Activated T-helper 1 cell treated with anti-CD3 and anti-CD28 coated beads, Interleukin-12 subunit alpha, Interleukin-12 subunit beta, Interleukin-2, Interleukin-4 antibody, amounts not matched to agents 30 ng/mL and 10 ng/mL and 1 ng/mL, durations not matched to agents 14 hours and 24 hours and 36 hours (primary cell): ENCODE measurements at regions of chr1 and their contacts with region 1.

Region 1: GRCh38 chr1:28359592-28360239 is 9.8 kb upstream of the PHACTR4 start:
- DNase-seq: peak; percentile 50
- H3K4me3 Mint-ChIP-seq: no peak overlapping the region
- H3K27ac Mint-ChIP-seq: no peak overlapping the region
- H3K4me1 Mint-ChIP-seq: no peaks in the 10 kb centered on the region
- H3K27me3 Mint-ChIP-seq: peaks cover 3% of the 10 kb centered on the region

Region 2: GRCh38 chr1:28129150-28129549 is 230.6 kb before region 1 on chr1:
- intact Hi-C with region 1: no loop called
- DNase-seq: no peak
- H3K4me3 Mint-ChIP-seq: no peak overlapping the region
- H3K27ac Mint-ChIP-seq: no peak overlapping the region
- H3K4me1 Mint-ChIP-seq: peaks cover 8% of the 10 kb centered on the region
- H3K27me3 Mint-ChIP-seq: peaks cover 45% of the 10 kb centered on the region

Region 3: GRCh38 chr1:28282426-28283407 is 77.0 kb before region 1 on chr1:
- intact Hi-C with region 1: no loop called
- DNase-seq: no peak
- H3K4me3 Mint-ChIP-seq: no peak overlapping the region
- H3K27ac Mint-ChIP-seq: no peak overlapping the region
- H3K4me1 Mint-ChIP-seq: peaks cover 8% of the 10 kb centered on the region
- H3K27me3 Mint-ChIP-seq: no peaks in the 10 kb centered on the region

Region 4: DNA sequence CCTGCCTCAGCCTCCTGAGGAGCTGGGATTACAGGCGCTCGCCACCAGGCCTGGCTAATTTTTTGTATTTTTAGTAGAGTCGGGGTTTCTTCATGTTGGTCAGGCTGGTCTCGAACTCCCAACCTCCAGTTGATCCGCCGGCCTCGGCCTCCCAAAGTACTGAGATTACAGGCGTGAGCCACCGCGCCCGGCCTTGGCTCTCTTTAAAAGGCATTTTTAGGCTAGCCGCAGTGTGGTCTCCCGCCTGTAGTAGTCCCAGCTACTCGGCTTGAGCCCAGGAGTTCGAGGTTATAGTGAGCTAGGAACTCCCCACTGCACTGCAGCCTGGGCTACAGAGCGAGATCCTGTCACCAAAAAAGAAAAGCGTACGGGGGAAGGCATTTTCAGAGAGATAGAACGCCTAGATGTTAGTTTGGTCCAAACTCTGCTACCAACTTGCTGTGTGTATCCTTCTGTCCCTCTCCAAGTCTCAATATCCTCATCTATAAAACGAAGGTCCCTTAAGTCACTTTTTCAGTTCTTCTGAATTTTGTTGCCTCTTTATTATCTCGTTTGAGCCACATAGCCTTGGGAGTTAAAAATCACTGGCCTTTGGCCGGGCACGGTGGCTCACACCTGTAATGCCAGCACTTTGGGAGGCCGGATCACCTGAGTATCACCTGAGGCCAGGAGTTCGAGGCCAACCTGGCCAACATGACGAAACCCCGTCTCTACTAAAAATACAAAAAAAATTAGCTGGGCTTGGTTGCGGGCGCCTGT is 30.1 kb before region 1 on chr1:
- intact Hi-C with region 1: no loop called
- DNase-seq: no peak
- H3K4me3 Mint-ChIP-seq: peak overlapping the region; percentile 96
- H3K27ac Mint-ChIP-seq: peak overlapping the region; percentile 98
- H3K4me1 Mint-ChIP-seq: peaks cover 31% of the 10 kb centered on the region
- H3K27me3 Mint-ChIP-seq: no peaks in the 10 kb centered on the region

Region 5: DNA sequence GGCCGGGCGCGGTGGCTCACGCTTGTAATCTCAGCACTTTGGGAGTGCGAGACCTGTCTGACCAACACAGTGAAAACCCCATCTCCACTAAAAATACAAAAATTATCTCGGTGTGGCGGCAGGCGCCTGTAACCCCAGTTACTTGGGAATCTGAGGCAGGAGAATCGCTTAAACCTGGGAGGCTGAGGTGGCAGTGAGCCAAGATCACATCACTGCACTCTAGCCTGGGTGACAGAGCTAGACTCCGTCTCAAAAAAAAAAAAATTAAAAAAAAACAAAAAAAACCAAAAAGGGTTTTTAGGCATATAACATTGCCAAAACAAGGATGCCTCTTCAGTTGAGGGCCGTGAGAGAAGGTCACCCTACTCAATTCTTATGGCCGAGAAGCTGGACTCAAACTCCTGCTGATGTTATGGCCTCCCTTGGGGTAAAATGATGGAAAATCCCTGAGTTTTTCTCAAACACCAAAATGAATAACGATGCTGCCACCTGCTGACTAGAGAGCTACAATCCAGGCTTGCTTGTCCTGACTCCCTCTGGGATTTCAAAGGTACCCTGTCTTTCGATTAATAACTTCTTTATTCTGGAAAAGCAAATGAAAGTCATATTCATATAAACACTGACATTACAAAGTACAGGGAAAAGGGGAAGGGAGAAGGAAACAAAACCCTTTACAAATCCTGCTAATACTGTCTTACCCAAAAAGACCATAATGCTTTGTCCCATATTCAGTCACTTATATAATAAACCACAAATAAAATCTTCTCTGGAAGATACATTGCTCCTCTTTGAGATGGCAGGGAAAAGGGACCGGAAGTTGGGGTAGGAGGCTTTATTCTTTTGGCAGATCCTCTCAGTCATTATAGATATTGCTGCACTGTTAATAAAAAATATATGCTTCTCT is 243.1 kb after region 1 on chr1:
- intact Hi-C with region 1: loop called (anchors 1 kb)
- DNase-seq: no peak
- H3K4me3 Mint-ChIP-seq: no peak overlapping the region
- H3K27ac Mint-ChIP-seq: no peak overlapping the region
- H3K4me1 Mint-ChIP-seq: peaks cover 23% of the 10 kb centered on the region
- H3K27me3 Mint-ChIP-seq: no peaks in the 10 kb centered on the region

Region 6: DNA sequence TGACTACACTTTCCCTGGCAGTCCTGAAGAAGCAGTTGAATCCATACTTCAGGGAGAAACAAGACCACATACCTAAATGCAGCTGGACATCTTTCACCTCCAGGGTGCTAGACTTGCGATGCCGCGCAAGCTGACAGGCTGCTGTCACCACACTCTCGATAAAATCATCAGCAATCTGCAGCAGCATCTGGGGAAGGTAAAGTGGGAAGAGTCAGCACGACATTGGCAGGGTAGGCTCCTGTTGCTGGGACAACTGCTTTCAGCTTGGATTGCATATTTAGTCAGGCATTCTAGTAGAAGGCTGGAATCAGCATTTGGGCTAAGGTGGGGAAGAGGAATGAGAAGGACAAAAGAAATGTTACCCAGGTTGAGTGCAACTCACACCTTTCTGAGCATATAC is 253.5 kb after region 1 on chr1:
- intact Hi-C with region 1: no loop called
- DNase-seq: no peak
- H3K4me3 Mint-ChIP-seq: no peak overlapping the region
- H3K27ac Mint-ChIP-seq: no peak overlapping the region
- H3K4me1 Mint-ChIP-seq: no peaks in the 10 kb centered on the region
- H3K27me3 Mint-ChIP-seq: no peaks in the 10 kb centered on the region

Region 7: DNA sequence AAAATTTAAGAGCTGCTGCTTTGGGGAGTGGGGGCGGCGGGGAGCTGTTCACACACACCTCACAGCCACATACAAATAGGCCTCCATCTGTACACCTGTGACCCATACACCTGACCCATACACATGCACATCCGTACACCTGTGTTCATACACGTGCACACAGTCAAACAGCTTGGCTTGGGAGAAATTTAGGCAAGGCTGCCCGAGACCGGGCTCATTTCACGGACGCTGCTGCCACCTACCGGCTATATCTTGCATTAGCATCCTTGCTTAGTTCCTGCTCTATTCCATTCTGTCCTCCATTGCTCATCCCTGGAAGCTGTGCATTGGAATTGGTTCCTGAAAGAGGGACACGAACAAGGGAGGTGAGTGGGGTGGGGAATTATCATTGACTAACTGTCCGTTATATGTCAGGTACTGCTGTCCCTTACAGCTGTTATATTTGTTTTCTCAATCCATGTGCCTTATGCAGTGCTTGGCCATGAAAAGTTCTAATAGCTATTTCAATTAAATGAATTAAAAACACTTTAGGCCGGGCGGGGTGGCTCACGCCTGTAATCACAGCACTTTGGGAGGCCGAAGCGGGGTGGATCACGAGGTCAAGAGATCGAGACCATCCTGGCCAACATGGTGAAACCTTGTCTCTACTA is 517.5 kb after region 1 on chr1:
- intact Hi-C with region 1: loop called (anchors 2 kb)
- DNase-seq: peak; percentile 54
- H3K4me3 Mint-ChIP-seq: no peak overlapping the region
- H3K27ac Mint-ChIP-seq: no peak overlapping the region
- H3K4me1 Mint-ChIP-seq: peaks cover 11% of the 10 kb centered on the region
- H3K27me3 Mint-ChIP-seq: peaks cover 5% of the 10 kb centered on the region